ENCODE measurements at regions of chr1 and their contacts with region 1.

Region 1: DNA sequence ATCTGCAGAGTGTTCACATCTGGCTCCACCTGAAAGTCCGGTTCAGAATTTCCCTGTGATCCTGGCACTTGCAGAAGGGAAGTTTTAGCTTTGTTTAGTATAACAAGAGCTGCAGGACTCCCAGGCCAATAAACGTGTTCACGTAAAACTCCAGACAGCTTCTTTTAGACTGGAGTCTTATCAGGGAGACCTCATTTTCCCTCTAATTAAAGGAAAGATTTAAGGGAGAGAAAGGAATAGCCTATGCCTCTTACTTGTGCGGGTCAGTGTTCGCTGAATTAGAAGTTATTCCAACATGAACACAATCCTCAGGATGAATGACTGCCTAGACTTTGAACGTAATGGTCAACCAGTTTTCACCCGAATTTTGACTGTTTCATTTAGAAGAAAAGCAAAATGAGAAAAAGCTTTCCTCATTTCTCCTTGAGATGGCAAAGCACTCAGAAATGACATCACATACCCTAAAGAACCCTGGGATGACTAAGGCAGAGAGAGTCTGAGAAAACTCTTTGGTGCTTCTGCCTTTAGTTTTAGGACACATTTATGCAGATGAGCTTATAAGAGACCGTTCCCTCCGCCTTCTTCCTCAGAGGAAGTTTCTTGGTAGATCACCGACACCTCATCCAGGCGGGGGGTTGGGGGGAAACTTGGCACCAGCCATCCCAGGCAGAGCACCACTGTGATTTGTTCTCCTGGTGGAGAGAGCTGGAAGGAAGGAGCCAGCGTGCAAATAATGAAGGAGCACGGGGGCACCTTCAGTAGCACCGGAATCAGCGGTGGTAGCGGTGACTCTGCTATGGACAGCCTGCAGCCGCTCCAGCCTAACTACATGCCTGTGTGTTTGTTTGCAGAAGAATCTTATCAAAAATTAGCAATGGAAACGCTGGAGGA is 202.1 kb upstream of the SGIP1 start:
- DNase-seq: no peak
- ATAC-seq: peak; percentile 74
- H3K4me3 ChIP-seq: peak overlapping the region; percentile 72
- H3K27ac ChIP-seq: peak overlapping the region; percentile 96
- H3K4me1 ChIP-seq: peaks cover 63 to 93% of the 10 kb centered on the region in 2 experiments
- H3K27me3 ChIP-seq: no peaks in the 10 kb centered on the region
- CTCF ChIP-seq: peak in 2 of 3 experiments; percentile 11 to 37; a peak in 2 of 6 replicates
- POLR2A ChIP-seq: no peak
- RAD21 ChIP-seq: no peak

Region 2: GRCh38 chr1:66271216-66271903 is 60.5 kb before region 1 on chr1:
- CTCF ChIA-PET with region 1: interaction called, 4 read pairs
- POLR2A ChIA-PET with region 1: interaction called, 28 read pairs
- RAD21 ChIA-PET with region 1: interaction called in 1 of 2 experiments, 5 read pairs
- intact Hi-C with region 1: loop called (anchors 1 kb)
- DNase-seq: peak; percentile 96
- ATAC-seq: peak; percentile 73
- H3K4me3 ChIP-seq: peak overlapping the region in 1 of 2 experiments; percentile 7; a peak in 1 of 4 replicates
- H3K27ac ChIP-seq: peak overlapping the region; percentile 96
- H3K4me1 ChIP-seq: peaks cover 68 to 94% of the 10 kb centered on the region in 2 experiments
- H3K27me3 ChIP-seq: no peaks in the 10 kb centered on the region
- CTCF ChIP-seq: no peak
- POLR2A ChIP-seq: no peak
- RAD21 ChIP-seq: peak; percentile 39; the same call in 1 of the 2 replicates

Region 3: GRCh38 chr1:66342707-66343106 is 10.8 kb after region 1 on chr1:
- CTCF ChIA-PET with region 1: interaction called, 4 read pairs
- POLR2A ChIA-PET with region 1: interaction called, 22 read pairs
- RAD21 ChIA-PET with region 1: interaction called in 1 of 2 experiments, 4 read pairs
- intact Hi-C with region 1: no loop called
- DNase-seq: no peak
- ATAC-seq: peak; percentile 58
- H3K4me3 ChIP-seq: no peak overlapping the region
- H3K27ac ChIP-seq: peak overlapping the region; percentile 96
- H3K4me1 ChIP-seq: peaks cover 94 to 98% of the 10 kb centered on the region in 2 experiments
- H3K27me3 ChIP-seq: no peaks in the 10 kb centered on the region
- CTCF ChIP-seq: no peak
- POLR2A ChIP-seq: no peak
- RAD21 ChIP-seq: no peak